Ascending aorta (tissue), 2 donors: ENCODE measurements at regions of chr1 and their contacts with region 1.

Region 1: DNA sequence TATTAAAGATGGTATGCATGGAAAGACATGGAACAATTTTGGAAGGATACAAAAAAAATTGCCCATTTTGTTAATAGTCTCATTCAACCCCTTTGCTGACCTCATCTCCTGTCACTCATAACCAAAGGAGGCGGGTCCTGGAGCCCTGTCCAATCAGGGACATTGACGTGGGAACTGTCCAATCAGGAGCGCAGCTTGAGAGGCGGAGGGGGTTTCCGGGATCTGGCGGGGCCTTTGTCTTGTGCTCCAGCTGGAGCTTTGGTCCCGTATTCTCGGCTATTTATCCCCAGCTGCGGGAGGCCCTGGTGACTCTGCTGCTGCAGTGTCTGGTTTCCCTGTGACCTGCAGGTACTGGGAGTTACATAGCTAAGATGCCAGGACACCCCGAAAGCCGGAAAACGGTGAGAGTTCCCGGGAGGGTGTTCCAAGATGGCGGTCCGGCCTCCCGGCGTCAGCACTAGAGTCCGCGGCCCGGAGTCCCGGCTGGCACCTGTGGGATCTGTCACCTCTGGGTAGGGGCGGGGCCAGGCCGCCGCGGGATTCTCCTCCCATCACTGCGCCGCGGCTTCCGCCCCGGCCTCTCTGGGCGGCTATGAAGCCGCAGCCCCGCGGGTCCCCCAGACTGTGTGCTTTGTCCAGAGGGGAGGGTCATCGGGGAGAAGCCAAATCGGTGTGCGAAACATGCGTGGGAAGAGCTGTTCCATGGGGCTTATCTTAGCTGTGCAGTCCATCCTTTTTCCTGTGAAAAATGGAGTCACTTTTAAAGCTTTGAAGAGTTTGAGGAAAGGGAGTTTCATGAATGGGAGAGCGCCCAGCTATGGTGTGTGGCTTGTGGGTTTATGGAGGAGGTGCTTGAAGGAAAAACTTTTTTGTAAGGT is at the start of gene ZNF678:
- DNase-seq: peak; percentile 78 to 95
- H3K4me3 ChIP-seq: peak within 1 kb of the TSS; percentile 65 to 71
- H3K27ac ChIP-seq: peak within 1 kb of the TSS; percentile 68 to 80
- H3K4me1 ChIP-seq: peaks cover 0 to 6% of the 10 kb centered on the region in 2 donors
- H3K27me3 ChIP-seq: no peaks in the 10 kb centered on the region
- CTCF ChIP-seq: no peak
- total RNA-seq, gene ZNF678: 0.75 TPM

Region 2: DNA sequence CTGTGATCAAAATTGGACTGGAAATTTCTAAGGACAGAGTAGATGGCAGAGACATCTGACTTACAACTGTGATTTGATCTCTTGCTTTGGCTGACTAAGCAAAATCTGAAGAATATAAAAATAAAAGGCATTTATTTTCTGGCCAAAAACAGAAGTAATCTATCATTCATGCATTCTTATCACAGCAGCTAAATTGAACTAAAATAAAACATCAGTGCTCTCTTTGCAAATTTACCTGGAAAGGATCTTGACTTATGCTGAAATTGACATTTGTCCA is 81.6 kb before region 1 on chr1:
- intact Hi-C with region 1: no loop called
- DNase-seq: no peak
- H3K4me3 ChIP-seq: no peak overlapping the region
- H3K27ac ChIP-seq: no peak overlapping the region
- H3K4me1 ChIP-seq: no peaks in the 10 kb centered on the region
- H3K27me3 ChIP-seq: no peaks in the 10 kb centered on the region
- CTCF ChIP-seq: no peak

Region 3: GRCh38 chr1:227728059-227728891 is 164.7 kb after region 1 on chr1:
- intact Hi-C with region 1: loop called (anchors 2 kb)
- DNase-seq: peak in 1 of 2 donors; percentile 83
- H3K4me3 ChIP-seq: peak overlapping the region; percentile 51 to 71
- H3K27ac ChIP-seq: peak overlapping the region; percentile 67 to 73
- H3K4me1 ChIP-seq: peaks cover 0 to 3% of the 10 kb centered on the region in 2 donors
- H3K27me3 ChIP-seq: no peaks in the 10 kb centered on the region
- CTCF ChIP-seq: no peak

Region 4: DNA sequence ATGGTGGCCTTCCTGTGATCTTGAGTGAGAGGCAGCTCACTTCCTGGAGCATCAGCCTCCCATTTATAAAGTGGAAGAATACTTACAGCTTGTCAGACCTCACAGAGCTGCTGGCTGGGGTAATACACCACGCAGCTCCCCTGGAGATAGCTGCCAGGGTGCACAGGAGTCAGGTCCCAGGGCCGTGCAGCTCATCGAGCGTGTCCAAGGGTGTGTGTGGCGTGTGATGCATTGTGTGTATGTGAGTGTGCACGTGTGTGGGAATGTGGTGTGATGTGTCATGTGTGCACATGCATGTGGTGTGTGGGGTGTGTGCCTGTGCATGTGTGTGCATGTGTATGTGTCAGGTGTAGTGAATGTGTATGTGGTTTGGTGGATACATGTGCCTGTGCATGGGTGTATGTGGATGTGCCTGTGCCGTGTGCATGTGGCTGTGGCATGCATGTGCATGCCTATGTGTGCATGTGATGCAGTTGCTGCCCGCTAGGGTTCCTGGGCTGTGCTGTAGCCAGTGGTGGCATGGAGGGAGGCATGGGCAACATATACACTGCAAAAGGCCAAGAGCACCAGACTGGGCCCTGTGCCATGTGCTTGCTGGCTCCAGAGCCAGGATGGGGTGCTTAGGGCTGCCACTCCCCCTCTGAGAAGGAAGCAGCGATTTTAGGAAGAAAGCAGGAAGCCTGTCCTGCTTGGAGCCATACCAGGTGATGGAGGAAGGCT is 467.9 kb after region 1 on chr1:
- intact Hi-C with region 1: no loop called
- DNase-seq: peak in 1 of 2 donors; percentile 34
- H3K4me3 ChIP-seq: no peak overlapping the region
- H3K27ac ChIP-seq: no peak overlapping the region
- H3K4me1 ChIP-seq: no peaks in the 10 kb centered on the region
- H3K27me3 ChIP-seq: no peaks in the 10 kb centered on the region
- CTCF ChIP-seq: no peak